CD14-positive monocyte (primary cell): ENCODE measurements at regions of chr5 and their contacts with region 1.

Region 1: DNA sequence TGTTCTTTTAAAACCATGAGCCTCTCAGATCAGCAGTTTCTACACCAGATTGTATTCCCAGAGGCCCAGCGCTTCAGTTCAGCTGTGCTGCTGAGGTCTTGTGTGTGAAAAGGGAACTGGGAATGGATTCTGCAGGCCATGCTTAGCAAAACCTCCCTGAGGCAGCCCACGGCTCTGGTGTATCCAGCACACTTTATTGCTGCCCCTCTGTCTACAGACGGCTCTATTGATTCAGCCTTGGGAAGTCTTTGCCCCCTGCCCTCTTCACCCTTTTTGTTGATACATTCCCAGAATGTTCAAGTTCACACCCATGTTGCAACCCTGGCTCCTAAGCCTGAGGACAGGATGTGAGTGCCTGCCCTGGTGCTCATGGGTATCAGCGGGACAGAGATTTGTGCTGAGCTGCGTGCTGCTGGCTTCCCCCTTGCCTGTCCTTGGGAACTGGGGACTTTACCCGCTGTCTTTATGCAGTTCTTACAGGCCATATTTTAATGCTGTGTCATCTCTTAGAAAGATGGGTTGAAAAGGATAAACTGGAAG is 37.3 kb downstream of the ARHGAP26 start:
- DNase-seq: peak; percentile 74 to 90 (median 82)
- H3K4me3 ChIP-seq: peak overlapping the region in 1 of 3 experiments; percentile 12
- H3K4me3 Mint-ChIP-seq: peak overlapping the region; percentile 12 to 68
- H3K27ac ChIP-seq: peak overlapping the region; percentile 86 to 98
- H3K27ac Mint-ChIP-seq: peak overlapping the region; percentile 95 to 100 (median 99)
- H3K4me1 ChIP-seq: peaks cover 97 to 100% of the 10 kb centered on the region in 2 donors
- H3K4me1 Mint-ChIP-seq: peaks cover 94% of the 10 kb centered on the region
- H3K27me3 ChIP-seq: no peaks in the 10 kb centered on the region
- H3K27me3 Mint-ChIP-seq: peaks cover 0 to 5% (median 0%) of the 10 kb centered on the region in 3 donors
- CTCF ChIP-seq: no peak

Region 2: GRCh38 chr5:142841511-142842265 is 34.2 kb after region 1 on chr5:
- intact Hi-C with region 1: loop called in 1 of 2 experiments (anchors 5 kb)
- DNase-seq: no peak
- H3K4me3 ChIP-seq: no peak overlapping the region
- H3K4me3 Mint-ChIP-seq: no peak overlapping the region
- H3K27ac ChIP-seq: no peak overlapping the region
- H3K27ac Mint-ChIP-seq: peak overlapping the region in 5 of 7 donors; percentile 6 to 76 (median 50)
- H3K4me1 ChIP-seq: peaks cover 71 to 80% of the 10 kb centered on the region in 2 donors
- H3K4me1 Mint-ChIP-seq: peaks cover 86% of the 10 kb centered on the region
- H3K27me3 ChIP-seq: no peaks in the 10 kb centered on the region
- H3K27me3 Mint-ChIP-seq: no peaks in the 10 kb centered on the region
- CTCF ChIP-seq: no peak

Region 3: DNA sequence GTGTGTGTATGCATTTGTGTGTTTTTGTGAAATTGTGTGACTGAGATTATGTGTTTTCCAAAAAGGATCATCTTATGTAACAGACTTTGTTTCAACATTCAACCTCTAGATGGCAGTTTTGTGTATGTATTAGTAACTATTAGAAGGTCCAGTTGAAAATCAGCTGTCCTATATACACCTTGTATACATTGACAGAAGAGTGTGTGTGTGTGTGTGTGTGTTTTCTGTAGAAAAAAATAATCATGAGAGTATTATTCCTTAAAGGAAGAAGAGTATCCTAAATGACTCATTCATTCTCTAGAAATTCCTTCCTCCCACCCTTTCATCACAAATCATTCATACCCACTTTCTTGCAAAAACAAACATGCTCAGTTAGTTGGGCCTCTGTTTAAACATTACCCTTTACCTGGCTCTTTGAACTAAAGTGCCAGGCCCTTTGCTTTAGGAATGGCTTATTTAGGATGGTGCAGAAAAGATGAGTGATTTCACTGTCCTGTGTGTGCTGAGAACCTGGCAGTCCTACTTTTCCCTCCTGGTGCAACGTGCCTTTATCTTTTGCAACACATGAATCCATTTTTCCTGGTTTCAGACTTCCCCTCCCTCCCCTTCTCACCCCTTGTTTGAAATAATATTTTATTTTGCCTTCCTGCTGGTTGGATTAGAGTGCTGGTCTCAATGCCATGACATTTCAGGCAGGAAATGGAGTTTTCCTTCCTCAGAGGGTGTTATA is 114.9 kb after region 1 on chr5:
- intact Hi-C with region 1: no loop called
- DNase-seq: peak in 2 of 3 donors; percentile 37 to 41
- H3K4me3 ChIP-seq: no peak overlapping the region
- H3K4me3 Mint-ChIP-seq: no peak overlapping the region
- H3K27ac ChIP-seq: no peak overlapping the region
- H3K27ac Mint-ChIP-seq: peak overlapping the region in 4 of 7 donors; percentile 28 to 62 (median 51)
- H3K4me1 ChIP-seq: peaks cover 31 to 42% of the 10 kb centered on the region in 2 donors
- H3K4me1 Mint-ChIP-seq: peaks cover 44% of the 10 kb centered on the region
- H3K27me3 ChIP-seq: no peaks in the 10 kb centered on the region
- H3K27me3 Mint-ChIP-seq: peaks cover 0 to 3% (median 0%) of the 10 kb centered on the region in 3 donors
- CTCF ChIP-seq: peak; percentile 63